ENCODE measurements at regions of chr1 and their contacts with region 1.

Region 1: DNA sequence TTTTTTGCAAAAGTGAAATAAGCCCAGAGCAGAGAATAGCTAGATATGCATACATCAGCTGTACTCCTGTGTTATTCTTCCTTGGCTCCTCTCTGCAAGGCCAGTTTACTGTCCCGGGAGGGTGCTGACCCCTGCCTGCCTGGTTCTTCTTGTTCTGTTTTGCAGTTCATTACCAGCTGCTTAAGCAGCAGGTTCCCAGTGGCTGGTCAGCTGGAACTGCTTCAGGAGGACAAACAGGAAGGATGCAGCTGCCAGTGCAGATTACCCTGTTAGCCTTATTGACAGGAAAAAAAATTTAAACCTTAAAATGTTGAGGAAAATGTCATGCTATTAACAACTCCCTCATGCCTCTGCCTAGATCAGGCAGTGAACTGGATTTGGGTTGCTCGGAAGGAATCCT is 16.0 kb upstream of the LRIG2 start:
- DNase-seq: no peak
- H3K4me3 ChIP-seq: no peak overlapping the region
- H3K27ac ChIP-seq: no peak overlapping the region
- H3K4me1 ChIP-seq: no peaks in the 10 kb centered on the region
- H3K27me3 ChIP-seq: no peaks in the 10 kb centered on the region
- CTCF ChIP-seq: no peak
- POLR2A ChIP-seq: no peak

Region 2: GRCh38 chr1:111672331-111672730 is 1384.7 kb before region 1 on chr1:
- intact Hi-C with region 1: no loop called
- DNase-seq: no peak
- H3K4me3 ChIP-seq: no peak overlapping the region
- H3K27ac ChIP-seq: no peak overlapping the region
- H3K4me1 ChIP-seq: no peaks in the 10 kb centered on the region
- H3K27me3 ChIP-seq: no peaks in the 10 kb centered on the region
- CTCF ChIP-seq: no peak
- POLR2A ChIP-seq: no peak

Region 3: DNA sequence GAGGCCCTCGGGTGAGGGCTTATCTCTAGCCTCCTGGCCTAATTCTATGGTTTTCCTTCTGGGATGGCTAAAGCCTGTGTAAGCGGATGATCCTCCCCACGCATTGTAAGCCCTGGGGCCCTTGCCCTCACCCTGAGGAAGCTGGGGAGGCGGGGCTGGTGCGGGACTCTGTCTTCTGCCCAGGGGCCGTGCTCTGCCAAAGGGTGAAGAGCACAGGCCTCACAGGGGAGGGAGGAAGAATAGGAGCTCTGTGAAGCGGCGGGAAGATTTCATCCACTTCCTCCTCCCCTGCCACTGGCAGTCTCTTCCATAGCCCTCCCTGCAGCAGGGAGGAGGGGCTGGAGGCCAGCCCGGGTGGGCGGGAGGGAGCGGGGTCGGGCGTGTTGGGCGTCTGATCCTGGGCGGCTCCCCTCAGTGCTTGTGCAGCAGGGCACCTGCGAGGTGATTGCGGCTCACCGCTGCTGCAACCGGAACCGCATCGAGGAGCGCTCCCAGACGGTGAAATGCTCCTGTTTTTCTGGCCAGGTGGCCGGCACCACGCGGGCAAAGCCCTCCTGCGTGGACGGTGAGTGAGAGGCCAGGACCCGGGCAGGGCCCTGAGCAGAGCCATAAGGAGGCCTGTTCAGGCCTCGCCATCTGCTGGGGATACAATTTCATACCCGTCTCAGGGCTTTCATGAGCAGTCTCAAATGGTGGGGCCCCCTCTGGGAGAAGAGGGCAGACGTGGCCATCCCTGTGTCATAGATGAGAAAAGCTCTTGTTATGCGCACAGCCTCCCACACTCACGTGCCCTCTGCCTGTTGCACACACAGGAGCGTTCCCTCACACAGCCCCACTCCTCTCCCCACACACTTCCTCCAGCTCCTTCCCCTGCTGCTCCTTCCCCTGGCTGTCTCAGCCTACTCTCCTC is 334.1 kb before region 1 on chr1:
- intact Hi-C with region 1: loop called (anchors 10 kb)
- DNase-seq: no peak
- H3K4me3 ChIP-seq: peak overlapping the region in 2 of 3 donors; percentile 37 to 48
- H3K27ac ChIP-seq: peak overlapping the region; percentile 29 to 48
- H3K4me1 ChIP-seq: peaks cover 7% of the 10 kb centered on the region in 2 donors
- H3K27me3 ChIP-seq: no peaks in the 10 kb centered on the region
- CTCF ChIP-seq: no peak
- POLR2A ChIP-seq: no peak

Region 4: GRCh38 chr1:113072757-113073478 is 15.9 kb after region 1 on chr1 and contains the start of gene LRIG2:
- intact Hi-C with region 1: no loop called
- DNase-seq: peak; percentile 98 to 99
- H3K4me3 ChIP-seq: peak within 1 kb of the TSS; percentile 85 to 93 (median 89)
- H3K27ac ChIP-seq: peak within 1 kb of the TSS; percentile 91
- H3K4me1 ChIP-seq: peaks cover 0 to 6% of the 10 kb centered on the region in 2 donors
- H3K27me3 ChIP-seq: no peaks in the 10 kb centered on the region
- CTCF ChIP-seq: peak; percentile 83 to 89 (median 88)
- POLR2A ChIP-seq: peak; percentile 92
- total RNA-seq, gene LRIG2: 20.0 to 39.8 (median 24.3) TPM

Region 5: GRCh38 chr1:113291777-113292602 is 235.0 kb after region 1 on chr1:
- intact Hi-C with region 1: no loop called
- DNase-seq: no peak
- H3K4me3 ChIP-seq: no peak overlapping the region
- H3K27ac ChIP-seq: no peak overlapping the region
- H3K4me1 ChIP-seq: no peaks in the 10 kb centered on the region
- H3K27me3 ChIP-seq: no peaks in the 10 kb centered on the region
- CTCF ChIP-seq: no peak
- POLR2A ChIP-seq: no peak

Measured in breast epithelium (tissue), 4 donors.